MCF 10A (cell line): ENCODE measurements at regions of chr1 and their contacts with region 1.

Region 1: DNA sequence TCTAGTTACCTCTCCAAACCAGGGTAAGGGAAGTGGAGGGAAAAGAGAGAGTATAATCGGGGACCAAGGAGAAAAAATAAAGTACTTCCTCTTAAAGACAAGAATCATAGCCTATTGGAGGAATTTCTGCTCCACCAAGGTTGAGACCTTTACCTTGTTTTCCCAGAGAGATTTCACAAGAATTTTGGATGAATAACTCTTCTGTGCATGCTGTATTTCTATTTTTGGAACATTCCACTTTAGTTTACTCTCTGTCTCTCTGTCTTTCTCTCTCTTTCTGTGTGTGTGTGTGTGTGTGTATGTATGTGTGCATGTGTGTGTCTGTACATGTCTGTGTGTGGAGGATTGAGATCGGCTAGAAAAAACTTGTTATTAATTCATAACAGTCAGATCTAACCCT is 318.4 kb upstream of the RGS18 start:
- DNase-seq: peak; percentile 52
- H3K4me3 Mint-ChIP-seq: peak overlapping the region; percentile 10
- H3K27ac Mint-ChIP-seq: peak overlapping the region; percentile 61
- H3K4me1 Mint-ChIP-seq: peaks cover 13% of the 10 kb centered on the region
- H3K27me3 Mint-ChIP-seq: no peaks in the 10 kb centered on the region
- CTCF ChIP-seq: no peak

Region 2: GRCh38 chr1:191804311-191804710 is 35.6 kb before region 1 on chr1:
- CTCF ChIA-PET with region 1: no interaction called
- POLR2A ChIA-PET with region 1: no interaction called
- intact Hi-C with region 1: no loop called
- DNase-seq: no peak
- H3K4me3 Mint-ChIP-seq: no peak overlapping the region
- H3K27ac Mint-ChIP-seq: no peak overlapping the region
- H3K4me1 Mint-ChIP-seq: no peaks in the 10 kb centered on the region
- H3K27me3 Mint-ChIP-seq: no peaks in the 10 kb centered on the region
- CTCF ChIP-seq: no peak

Region 3: DNA sequence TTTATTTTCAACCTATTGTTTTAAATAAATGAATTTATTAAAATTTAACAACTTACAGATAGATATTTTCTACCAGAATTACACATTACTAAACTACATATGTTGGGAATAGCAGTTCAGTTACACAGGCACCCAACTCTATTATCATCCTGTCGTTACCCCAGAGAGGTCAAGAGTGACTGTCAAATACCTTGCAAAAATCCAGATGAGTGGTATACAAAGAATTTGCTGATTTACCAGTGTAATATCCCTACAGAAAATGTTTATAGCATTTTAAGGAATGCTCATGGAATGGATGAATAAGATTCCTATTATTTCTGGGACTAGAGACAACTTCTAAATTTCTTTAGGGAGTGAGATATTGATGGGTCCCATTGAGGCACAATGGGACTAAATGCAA is 17.7 kb after region 1 on chr1:
- CTCF ChIA-PET with region 1: no interaction called
- POLR2A ChIA-PET with region 1: no interaction called
- intact Hi-C with region 1: loop called (anchors 1 kb)
- DNase-seq: no peak
- H3K4me3 Mint-ChIP-seq: no peak overlapping the region
- H3K27ac Mint-ChIP-seq: no peak overlapping the region
- H3K4me1 Mint-ChIP-seq: no peaks in the 10 kb centered on the region
- H3K27me3 Mint-ChIP-seq: no peaks in the 10 kb centered on the region
- CTCF ChIP-seq: no peak